Esophagus squamous epithelium (tissue), 5 donors: ENCODE measurements at regions of chr14 and their contacts with region 1.

Region 1: GRCh38 chr14:36941783-36942521 is 230.5 kb downstream of the SLC25A21 start:
- DNase-seq: no peak
- H3K4me3 ChIP-seq: no peak overlapping the region
- H3K27ac ChIP-seq: peak overlapping the region in 3 of 4 donors; percentile 47 to 78 (median 71)
- H3K4me1 ChIP-seq: peaks cover 0 to 62% (median 4%) of the 10 kb centered on the region in 3 donors
- H3K27me3 ChIP-seq: no peaks in the 10 kb centered on the region
- CTCF ChIP-seq: peak; percentile 61 to 97 (median 96)
- POLR2A ChIP-seq: no peak

Region 2: DNA sequence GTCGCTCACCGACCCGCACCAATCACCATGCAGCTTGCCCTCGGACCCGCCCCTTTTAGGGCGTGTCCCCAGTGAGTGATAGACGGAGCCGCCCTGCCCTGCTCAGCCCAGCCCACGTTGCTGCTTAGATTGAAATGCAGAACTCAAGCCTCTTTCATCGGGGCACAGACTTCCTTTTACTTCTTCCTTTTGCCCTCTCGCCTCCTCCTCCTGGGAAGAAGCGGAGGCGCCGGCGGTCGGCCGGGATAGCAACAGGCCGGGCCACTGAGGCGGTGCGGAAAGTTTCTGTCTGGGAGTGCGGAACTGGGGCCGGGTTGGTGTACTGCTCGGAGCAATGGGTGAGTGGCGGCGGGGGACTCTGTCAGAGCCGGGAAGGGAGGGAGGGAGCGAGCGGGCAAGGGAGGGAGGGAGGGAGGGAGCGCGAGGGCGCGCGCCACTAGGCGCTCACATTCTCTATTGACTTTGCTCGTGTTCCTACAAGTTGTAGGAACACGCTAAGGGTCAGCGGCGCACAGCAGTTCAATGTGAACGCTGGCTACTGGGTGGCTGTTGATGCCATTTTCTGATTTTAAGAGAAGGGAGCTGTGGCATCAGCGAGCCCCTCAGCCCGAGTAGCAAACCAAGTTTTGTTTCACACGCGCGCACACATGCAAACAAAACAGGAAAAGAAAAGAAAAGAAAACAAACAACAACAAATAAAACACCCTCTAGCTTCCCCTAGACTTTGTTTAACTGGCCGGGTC is 280.0 kb before region 1 on chr14 and contains the start of gene PAX9:
- intact Hi-C with region 1: loop called (anchors 10 kb)
- DNase-seq: no peak
- H3K4me3 ChIP-seq: peak within 1 kb of the TSS; percentile 70 to 75 (median 71)
- H3K27ac ChIP-seq: peak within 1 kb of the TSS; percentile 82 to 96 (median 94)
- H3K4me1 ChIP-seq: peaks cover 0 to 84% (median 28%) of the 10 kb centered on the region in 3 donors
- H3K27me3 ChIP-seq: peaks cover 0 to 100% (median 44%) of the 10 kb centered on the region in 4 donors
- CTCF ChIP-seq: no peak
- POLR2A ChIP-seq: peak in 2 of 4 donors; percentile 15 to 69
- total RNA-seq, gene PAX9: 70.1 to 152 (median 100) TPM

Region 3: GRCh38 chr14:36773136-36773540 is 168.8 kb before region 1 on chr14:
- intact Hi-C with region 1: loop called (anchors 10 kb)
- DNase-seq: no peak
- H3K4me3 ChIP-seq: no peak overlapping the region
- H3K27ac ChIP-seq: no peak overlapping the region
- H3K4me1 ChIP-seq: peaks cover 0 to 52% (median 8%) of the 10 kb centered on the region in 3 donors
- H3K27me3 ChIP-seq: no peaks in the 10 kb centered on the region
- CTCF ChIP-seq: peak in 3 of 6 experiments; percentile 30 to 54 (median 39)
- POLR2A ChIP-seq: no peak

Region 4: GRCh38 chr14:37122254-37122653 is 180.3 kb after region 1 on chr14:
- intact Hi-C with region 1: loop called (anchors 10 kb)
- DNase-seq: no peak
- H3K4me3 ChIP-seq: no peak overlapping the region
- H3K27ac ChIP-seq: peak overlapping the region in 2 of 4 donors; percentile 9 to 30
- H3K4me1 ChIP-seq: peaks cover 0 to 18% (median 0%) of the 10 kb centered on the region in 3 donors
- H3K27me3 ChIP-seq: no peaks in the 10 kb centered on the region
- CTCF ChIP-seq: no peak
- POLR2A ChIP-seq: no peak